ENCODE measurements at regions of chr18 and their contacts with region 1.

Region 1: GRCh38 chr18:3652380-3653262 is 202.6 kb downstream of the TGIF1 start:
- DNase-seq: peak; percentile 100
- H3K4me3 ChIP-seq: no peak overlapping the region
- H3K27ac ChIP-seq: peak overlapping the region; percentile 85
- H3K4me1 ChIP-seq: peaks cover 40% of the 10 kb centered on the region
- H3K27me3 ChIP-seq: no peaks in the 10 kb centered on the region
- CTCF ChIP-seq: peak in 1 of 2 donors; percentile 32

Region 2: GRCh38 chr18:3117493-3118192 is 535.0 kb before region 1 on chr18:
- CTCF ChIA-PET with region 1: no interaction called
- dilution Hi-C with region 1: no loop called
- in situ Hi-C with region 1: no loop called
- intact Hi-C with region 1: no loop called
- DNase-seq: peak; percentile 15
- H3K4me3 ChIP-seq: no peak overlapping the region
- H3K27ac ChIP-seq: no peak overlapping the region
- H3K4me1 ChIP-seq: no peaks in the 10 kb centered on the region
- H3K27me3 ChIP-seq: no peaks in the 10 kb centered on the region
- CTCF ChIP-seq: no peak

Region 3: DNA sequence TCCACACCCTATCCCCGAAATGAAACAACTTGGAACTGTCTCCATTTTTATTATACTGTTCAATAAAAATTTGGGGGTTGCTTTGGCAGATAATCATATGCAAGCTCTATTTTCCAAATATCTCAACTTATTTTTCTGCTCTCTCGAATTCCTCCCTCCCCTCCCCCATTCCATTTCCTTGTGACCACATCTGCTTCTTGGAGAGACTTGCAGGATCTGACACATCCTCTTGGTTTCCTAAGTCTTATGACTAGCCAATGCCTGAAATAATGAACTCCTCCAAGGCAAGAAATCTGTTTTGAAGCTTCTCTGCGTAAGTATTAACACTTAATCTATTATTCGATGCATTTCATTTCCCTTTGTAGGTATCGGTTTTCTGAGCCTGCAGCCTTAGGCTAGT is 186.6 kb before region 1 on chr18:
- CTCF ChIA-PET with region 1: interaction called, 13 read pairs
- dilution Hi-C with region 1: no loop called
- in situ Hi-C with region 1: no loop called
- intact Hi-C with region 1: no loop called
- DNase-seq: peak; percentile 79
- H3K4me3 ChIP-seq: no peak overlapping the region
- H3K27ac ChIP-seq: no peak overlapping the region
- H3K4me1 ChIP-seq: peaks cover 16% of the 10 kb centered on the region
- H3K27me3 ChIP-seq: no peaks in the 10 kb centered on the region
- CTCF ChIP-seq: no peak

Region 4: DNA sequence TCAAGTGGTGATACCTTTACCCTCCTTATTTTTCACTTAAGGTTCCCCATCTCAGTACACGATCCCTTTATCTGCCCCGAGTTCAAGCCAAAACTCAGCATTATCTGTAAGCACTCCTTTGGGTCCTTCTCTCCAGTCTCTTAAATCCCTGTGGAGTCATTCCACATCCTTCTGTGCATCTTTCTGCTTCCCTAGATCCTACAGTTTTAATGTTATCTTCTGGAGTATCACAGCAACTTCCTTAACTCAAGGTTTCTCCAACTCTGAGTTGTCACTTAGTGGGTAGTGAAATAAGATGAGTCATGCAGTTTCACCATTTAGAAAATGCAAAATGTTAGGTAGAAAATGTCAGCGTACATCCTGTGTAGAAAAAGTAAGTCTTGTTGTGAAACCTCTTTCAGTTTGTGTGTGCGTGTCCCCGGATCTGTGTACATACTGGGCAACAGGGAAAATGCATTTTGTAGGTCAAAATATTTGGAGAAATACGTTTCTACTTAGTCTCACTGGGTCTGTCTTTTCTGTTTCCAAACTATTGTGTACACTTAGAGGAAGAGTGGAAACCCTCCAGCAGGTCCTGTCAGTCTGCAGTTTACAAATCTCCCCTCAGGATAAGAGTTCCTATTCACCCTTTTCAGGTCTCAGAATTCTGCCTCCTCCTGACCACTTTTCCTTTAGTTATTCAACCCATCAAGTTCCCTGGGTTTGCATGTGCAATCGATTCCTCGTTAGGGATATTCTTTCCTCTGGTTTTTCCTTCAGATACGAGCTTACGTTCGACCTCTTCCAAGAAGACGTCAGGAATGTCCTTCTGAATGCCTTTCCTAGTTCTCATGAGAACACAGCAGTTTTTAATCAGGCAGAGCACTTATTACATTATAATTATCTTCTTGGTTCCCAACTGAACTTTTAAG is 47.9 kb before region 1 on chr18:
- CTCF ChIA-PET with region 1: no interaction called
- dilution Hi-C with region 1: no loop called
- in situ Hi-C with region 1: loop called in 1 of 2 experiments (anchors 5 kb)
- intact Hi-C with region 1: loop called (anchors 1 kb)
- DNase-seq: peak; percentile 91
- H3K4me3 ChIP-seq: peak overlapping the region; percentile 25 to 53 (median 42)
- H3K27ac ChIP-seq: peak overlapping the region; percentile 99
- H3K4me1 ChIP-seq: peaks cover 35% of the 10 kb centered on the region
- H3K27me3 ChIP-seq: no peaks in the 10 kb centered on the region
- CTCF ChIP-seq: no peak

Region 5: GRCh38 chr18:3623769-3624545 is 28.7 kb before region 1 on chr18:
- CTCF ChIA-PET with region 1: interaction called, 6 read pairs
- dilution Hi-C with region 1: no loop called
- in situ Hi-C with region 1: no loop called
- intact Hi-C with region 1: loop called (anchors 1 kb)
- DNase-seq: peak; percentile 98
- H3K4me3 ChIP-seq: peak overlapping the region; percentile 18 to 43 (median 39)
- H3K27ac ChIP-seq: peak overlapping the region; percentile 100
- H3K4me1 ChIP-seq: peaks cover 40% of the 10 kb centered on the region
- H3K27me3 ChIP-seq: no peaks in the 10 kb centered on the region
- CTCF ChIP-seq: no peak

Region 6: DNA sequence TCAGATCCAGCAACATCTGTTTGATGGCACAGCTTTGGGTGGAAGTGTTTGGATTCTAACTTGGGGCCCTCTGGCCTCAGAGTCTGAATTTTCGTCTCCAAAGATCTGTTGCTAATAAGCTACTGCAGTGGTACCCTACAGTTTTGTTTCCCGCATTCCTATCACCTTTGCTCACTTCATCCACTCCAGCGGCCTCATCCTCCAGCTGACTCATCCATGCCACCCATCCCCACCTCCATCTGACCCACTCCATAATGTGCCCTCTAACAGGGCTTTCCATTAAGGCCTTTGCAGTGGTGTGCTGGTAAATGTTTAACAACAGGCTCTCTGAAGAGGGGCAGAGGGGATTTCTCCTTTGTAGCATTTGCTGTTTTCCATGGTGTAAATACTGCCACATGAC is 22.8 kb after region 1 on chr18:
- CTCF ChIA-PET with region 1: no interaction called
- dilution Hi-C with region 1: no loop called
- in situ Hi-C with region 1: no loop called
- intact Hi-C with region 1: no loop called
- DNase-seq: peak; percentile 59
- H3K4me3 ChIP-seq: no peak overlapping the region
- H3K27ac ChIP-seq: peak overlapping the region; percentile 47
- H3K4me1 ChIP-seq: peaks cover 17% of the 10 kb centered on the region
- H3K27me3 ChIP-seq: no peaks in the 10 kb centered on the region
- CTCF ChIP-seq: no peak